IMR-90 (cell line): ENCODE measurements at regions of chrX and their contacts with region 1.

Region 1: GRCh38 chrX:114599911-114600310 is 16.0 kb downstream of the HTR2C start:
- DNase-seq: no peak
- ATAC-seq: no peak
- H3K4me3 ChIP-seq: no peak overlapping the region
- H3K27ac ChIP-seq: no peak overlapping the region
- H3K4me1 ChIP-seq: no peaks in the 10 kb centered on the region
- H3K27me3 ChIP-seq: no peaks in the 10 kb centered on the region
- CTCF ChIP-seq: no peak
- POLR2A ChIP-seq: no peak
- RAD21 ChIP-seq: no peak

Region 2: GRCh38 chrX:114134465-114134864 is 465.4 kb before region 1 on chrX:
- CTCF ChIA-PET with region 1: no interaction called
- POLR2A ChIA-PET with region 1: no interaction called
- dilution Hi-C with region 1: no loop called
- in situ Hi-C with region 1: no loop called
- intact Hi-C with region 1: no loop called
- DNase-seq: no peak
- ATAC-seq: no peak
- H3K4me3 ChIP-seq: no peak overlapping the region
- H3K27ac ChIP-seq: no peak overlapping the region
- H3K4me1 ChIP-seq: no peaks in the 10 kb centered on the region
- H3K27me3 ChIP-seq: no peaks in the 10 kb centered on the region
- CTCF ChIP-seq: no peak
- POLR2A ChIP-seq: no peak
- RAD21 ChIP-seq: no peak

Region 3: DNA sequence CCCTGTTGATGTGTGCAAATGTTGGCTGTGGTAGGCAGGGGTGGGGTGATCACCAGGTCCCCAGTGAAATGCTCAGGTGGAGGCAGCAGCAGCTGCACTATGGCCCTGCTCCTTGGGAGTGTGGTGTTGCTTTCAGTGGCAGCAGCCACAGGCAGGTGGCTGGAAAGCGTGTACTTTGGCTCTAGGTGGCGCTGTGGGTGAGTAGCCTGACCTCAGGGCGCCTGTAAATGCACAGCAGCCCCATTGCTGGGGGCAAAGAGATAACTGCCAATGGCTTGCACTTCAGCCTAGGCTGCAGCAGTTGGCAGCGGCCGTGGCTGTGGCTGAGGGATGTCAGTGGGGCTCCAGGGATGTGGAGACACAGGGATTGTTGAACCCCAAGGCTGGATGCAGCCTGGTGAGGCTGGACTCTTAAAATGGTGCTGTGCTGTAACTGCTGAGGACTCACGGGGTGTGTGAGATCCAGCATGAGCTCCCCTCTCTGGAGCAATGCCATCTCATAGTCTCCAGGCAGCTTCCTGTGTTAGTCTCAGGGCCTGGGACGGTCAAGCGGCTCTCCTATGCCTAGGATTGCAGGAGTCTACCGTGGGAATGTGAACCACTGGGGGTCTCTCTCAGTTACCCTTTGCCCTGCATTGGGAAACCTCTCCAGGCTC is 437.7 kb before region 1 on chrX:
- CTCF ChIA-PET with region 1: no interaction called
- POLR2A ChIA-PET with region 1: no interaction called
- dilution Hi-C with region 1: no loop called
- in situ Hi-C with region 1: no loop called
- intact Hi-C with region 1: no loop called
- DNase-seq: no peak
- ATAC-seq: no peak
- H3K4me3 ChIP-seq: no peak overlapping the region
- H3K27ac ChIP-seq: no peak overlapping the region
- H3K4me1 ChIP-seq: no peaks in the 10 kb centered on the region
- H3K27me3 ChIP-seq: no peaks in the 10 kb centered on the region
- CTCF ChIP-seq: no peak
- POLR2A ChIP-seq: no peak
- RAD21 ChIP-seq: no peak

Region 4: GRCh38 chrX:114472788-114473187 is 127.1 kb before region 1 on chrX:
- CTCF ChIA-PET with region 1: no interaction called
- POLR2A ChIA-PET with region 1: no interaction called
- dilution Hi-C with region 1: no loop called
- in situ Hi-C with region 1: no loop called
- intact Hi-C with region 1: loop called (anchors 5 kb)
- DNase-seq: no peak
- ATAC-seq: no peak
- H3K4me3 ChIP-seq: no peak overlapping the region
- H3K27ac ChIP-seq: no peak overlapping the region
- H3K4me1 ChIP-seq: no peaks in the 10 kb centered on the region
- H3K27me3 ChIP-seq: no peaks in the 10 kb centered on the region
- CTCF ChIP-seq: no peak
- POLR2A ChIP-seq: no peak
- RAD21 ChIP-seq: no peak